ENCODE measurements at regions of chr1 and their contacts with region 1.

Region 1: GRCh38 chr1:23384302-23385058 is 14.8 kb upstream of the ZNF436 start:
- DNase-seq: peak; percentile 21
- H3K4me3 ChIP-seq: no peak overlapping the region
- H3K27ac ChIP-seq: no peak overlapping the region
- H3K4me1 ChIP-seq: peaks cover 20% of the 10 kb centered on the region
- H3K27me3 ChIP-seq: no peaks in the 10 kb centered on the region
- CTCF ChIP-seq: no peak
- POLR2A ChIP-seq: no peak

Region 2: GRCh38 chr1:23394684-23395083 is 10.2 kb after region 1 on chr1:
- CTCF ChIA-PET with region 1: interaction called, 5 read pairs
- POLR2A ChIA-PET with region 1: no interaction called
- dilution Hi-C with region 1: no loop called
- intact Hi-C with region 1: loop called (anchors 1 kb)
- DNase-seq: no peak
- H3K4me3 ChIP-seq: no peak overlapping the region
- H3K27ac ChIP-seq: no peak overlapping the region
- H3K4me1 ChIP-seq: peaks cover 15% of the 10 kb centered on the region
- H3K27me3 ChIP-seq: no peaks in the 10 kb centered on the region
- CTCF ChIP-seq: no peak
- POLR2A ChIP-seq: no peak

Measured in endothelial cell of umbilical vein (primary cell).